HCT116 (cell line): ENCODE measurements at regions of chr11 and their contacts with region 1.

Region 1: GRCh38 chr11:47176328-47177228 is at the start of gene ARFGAP2:
- DNase-seq: peak; percentile 86
- ATAC-seq: peak; percentile 94
- H3K4me3 ChIP-seq: peak within 1 kb of the TSS; percentile 97 to 99
- H3K27ac ChIP-seq: peak within 1 kb of the TSS; percentile 89
- H3K4me1 ChIP-seq: peaks cover 11 to 24% of the 10 kb centered on the region in 2 experiments; a peak in 3 of 4 replicates
- H3K27me3 ChIP-seq: no peaks in the 10 kb centered on the region
- CTCF ChIP-seq: no peak
- POLR2A ChIP-seq: no peak
- RAD21 ChIP-seq: no peak
- total RNA-seq, gene ARFGAP2: 73.5 TPM

Region 2: GRCh38 chr11:47161134-47161854 is 15.3 kb before region 1 on chr11:
- CTCF ChIA-PET with region 1: no interaction called
- POLR2A ChIA-PET with region 1: no interaction called
- RAD21 ChIA-PET with region 1: no interaction called
- intact Hi-C with region 1: no loop called
- DNase-seq: no peak
- ATAC-seq: peak; percentile 89
- H3K4me3 ChIP-seq: no peak overlapping the region
- H3K27ac ChIP-seq: no peak overlapping the region
- H3K4me1 ChIP-seq: no peaks in the 10 kb centered on the region
- H3K27me3 ChIP-seq: no peaks in the 10 kb centered on the region
- CTCF ChIP-seq: peak; percentile 68 to 92 (median 82)
- POLR2A ChIP-seq: no peak
- RAD21 ChIP-seq: peak; percentile 71

Region 3: GRCh38 chr11:47248664-47249377 is 72.2 kb after region 1 on chr11 and contains the start of gene ACP2:
- CTCF ChIA-PET with region 1: no interaction called
- POLR2A ChIA-PET with region 1: no interaction called
- RAD21 ChIA-PET with region 1: no interaction called
- intact Hi-C with region 1: loop called (anchors 2 kb)
- DNase-seq: peak; percentile 79
- ATAC-seq: peak; percentile 91
- H3K4me3 ChIP-seq: peak within 1 kb of the TSS; percentile 71 to 96
- H3K27ac ChIP-seq: peak within 1 kb of the TSS; percentile 73
- H3K4me1 ChIP-seq: peaks cover 7 to 16% of the 10 kb centered on the region in 2 experiments; a peak in 2 of 4 replicates
- H3K27me3 ChIP-seq: no peaks in the 10 kb centered on the region
- CTCF ChIP-seq: 0 out of 6 replicates have a peak, but pooled peaks of 2 of the 3 experiments have one; percentile 16 to 28
- POLR2A ChIP-seq: peak; percentile 95
- RAD21 ChIP-seq: peak; percentile 41
- total RNA-seq, gene ACP2: 21.5 TPM

Region 4: DNA sequence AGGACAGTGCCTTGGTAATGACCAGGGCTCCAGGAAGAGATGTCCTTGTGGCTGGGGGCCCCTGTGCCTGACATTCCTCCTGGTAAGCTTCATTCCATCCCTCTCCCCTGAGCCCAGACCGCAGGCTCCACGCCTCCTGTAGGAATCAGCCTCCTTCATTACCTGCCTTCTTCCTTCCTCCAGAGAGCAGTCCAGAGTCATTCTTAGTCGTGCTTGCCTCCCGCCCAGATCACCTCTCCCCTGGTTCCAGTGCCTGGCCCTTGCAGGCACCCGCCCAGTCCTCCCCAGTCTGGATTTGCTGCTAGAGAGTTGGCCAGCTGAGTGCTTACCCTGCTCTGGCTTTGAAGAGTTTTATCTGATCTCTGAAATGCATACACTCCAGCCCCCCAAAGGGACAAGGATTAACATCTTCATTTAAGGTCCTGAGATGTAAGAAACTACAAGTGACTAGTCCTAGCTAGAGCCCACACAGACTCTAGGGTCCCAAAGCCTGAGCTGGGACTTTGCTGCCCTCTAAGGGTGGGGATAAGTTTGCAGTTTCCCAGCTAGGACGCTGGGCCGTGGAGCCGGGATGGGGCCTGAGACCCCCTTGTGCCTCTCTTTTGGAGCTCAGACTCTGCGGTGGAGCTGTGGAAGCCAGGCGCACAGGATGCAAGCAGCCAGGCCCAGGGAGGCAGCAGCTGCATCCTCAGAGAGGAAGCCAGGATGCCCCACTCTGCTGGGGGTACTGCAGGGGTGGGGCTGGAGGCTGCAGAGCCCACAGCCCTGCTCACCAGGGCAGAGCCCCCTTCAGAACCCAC is 82.8 kb after region 1 on chr11:
- CTCF ChIA-PET with region 1: interaction called, 10 read pairs
- POLR2A ChIA-PET with region 1: no interaction called
- RAD21 ChIA-PET with region 1: no interaction called
- intact Hi-C with region 1: loop called (anchors 2 kb)
- DNase-seq: no peak
- ATAC-seq: peak; percentile 88
- H3K4me3 ChIP-seq: no peak overlapping the region
- H3K27ac ChIP-seq: no peak overlapping the region
- H3K4me1 ChIP-seq: peaks cover 7 to 10% of the 10 kb centered on the region in 2 experiments
- H3K27me3 ChIP-seq: no peaks in the 10 kb centered on the region
- CTCF ChIP-seq: peak; percentile 63 to 69 (median 68)
- POLR2A ChIP-seq: no peak
- RAD21 ChIP-seq: peak; percentile 69